Activated naive CD4-positive, alpha-beta T cell treated with anti-CD3 and anti-CD28 coated beads for 36 hours (primary cell): ENCODE measurements at regions of chr5 and their contacts with region 1.

Region 1: GRCh38 chr5:21817668-21818369 is 1035.3 kb downstream of the CDH12 start:
- DNase-seq: no peak
- H3K4me3 Mint-ChIP-seq: no peak overlapping the region
- H3K27ac Mint-ChIP-seq: no peak overlapping the region
- H3K4me1 Mint-ChIP-seq: peaks cover 2% of the 10 kb centered on the region
- H3K27me3 Mint-ChIP-seq: no peaks in the 10 kb centered on the region

Region 2: DNA sequence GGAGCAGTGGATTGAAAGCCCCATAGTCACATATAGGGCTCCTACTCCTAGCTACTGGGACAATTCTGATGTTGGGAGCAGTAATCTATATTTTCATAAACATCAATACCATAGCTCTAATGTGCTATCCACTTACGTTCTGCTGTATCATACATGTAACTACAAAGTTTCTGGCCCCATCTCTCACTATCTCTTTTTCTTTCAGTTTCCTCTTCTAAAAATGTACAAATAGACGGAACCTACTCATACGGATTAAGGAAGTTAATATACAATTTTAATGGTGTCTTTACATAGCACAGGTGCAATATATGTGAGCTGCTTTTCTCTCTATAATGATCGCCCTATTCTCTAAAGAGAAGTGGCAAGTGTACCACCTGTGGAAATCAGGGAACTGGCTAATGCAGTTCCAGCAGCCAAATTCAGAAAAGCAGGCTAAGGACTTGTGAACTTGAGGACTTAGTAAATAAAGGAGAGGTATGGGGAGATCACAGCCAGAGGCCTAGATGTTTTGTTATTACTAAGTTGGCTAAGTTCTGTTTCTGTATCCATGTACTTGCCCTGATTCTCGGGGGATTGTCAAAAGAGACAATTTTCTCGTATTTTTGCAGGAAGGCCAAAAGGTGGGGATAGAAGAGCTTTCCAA is 13.4 kb after region 1 on chr5:
- CTCF ChIA-PET with region 1: no interaction called
- intact Hi-C with region 1: no loop called
- DNase-seq: no peak
- H3K4me3 Mint-ChIP-seq: no peak overlapping the region
- H3K27ac Mint-ChIP-seq: no peak overlapping the region
- H3K4me1 Mint-ChIP-seq: no peaks in the 10 kb centered on the region
- H3K27me3 Mint-ChIP-seq: no peaks in the 10 kb centered on the region

Region 3: DNA sequence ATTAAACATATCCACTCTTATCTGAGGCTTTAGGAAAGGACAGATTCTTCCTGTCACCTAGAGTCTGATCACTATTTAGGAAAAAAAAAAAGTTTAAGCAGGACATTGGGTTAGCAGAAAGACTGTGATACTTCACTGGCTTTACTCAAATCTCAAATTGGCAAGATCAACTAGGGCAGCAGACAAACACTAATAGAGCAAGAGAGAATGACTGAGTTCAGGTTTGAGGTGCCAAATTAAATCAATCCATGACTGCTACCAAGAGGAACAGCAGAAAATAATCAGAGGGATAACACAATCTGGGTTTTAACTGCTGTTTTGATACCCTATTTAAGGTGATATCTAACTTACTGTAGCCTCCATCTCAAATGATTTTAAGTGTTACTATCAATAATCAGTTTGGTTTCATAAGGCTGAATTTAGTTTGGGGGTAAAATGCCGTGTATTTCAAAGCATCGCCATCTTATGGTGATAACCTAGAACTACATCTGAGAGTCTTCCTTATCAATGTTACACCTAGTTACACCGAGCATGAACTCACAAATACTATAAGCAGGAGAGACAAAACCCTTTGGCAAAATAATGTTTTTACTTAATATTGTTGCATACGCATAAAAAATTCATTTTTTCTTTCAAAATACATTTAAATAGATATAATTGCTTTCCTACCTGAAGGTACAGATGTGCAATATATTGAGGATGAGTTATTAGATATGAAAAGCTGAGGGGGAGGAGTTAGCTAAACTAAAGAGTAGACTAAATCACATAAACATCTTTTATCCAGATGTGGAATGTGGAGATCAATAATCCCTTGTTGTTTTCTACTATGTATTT is 1321.7 kb after region 1 on chr5:
- CTCF ChIA-PET with region 1: no interaction called
- intact Hi-C with region 1: loop called (anchors 5 kb)
- DNase-seq: no peak
- H3K4me3 Mint-ChIP-seq: no peak overlapping the region
- H3K27ac Mint-ChIP-seq: no peak overlapping the region
- H3K4me1 Mint-ChIP-seq: no peaks in the 10 kb centered on the region
- H3K27me3 Mint-ChIP-seq: no peaks in the 10 kb centered on the region